Activated CD8-positive, alpha-beta T cell treated with anti-CD3 and anti-CD28 coated beads for 36 hours (primary cell): ENCODE measurements at regions of chr10 and their contacts with region 1.

Region 1: DNA sequence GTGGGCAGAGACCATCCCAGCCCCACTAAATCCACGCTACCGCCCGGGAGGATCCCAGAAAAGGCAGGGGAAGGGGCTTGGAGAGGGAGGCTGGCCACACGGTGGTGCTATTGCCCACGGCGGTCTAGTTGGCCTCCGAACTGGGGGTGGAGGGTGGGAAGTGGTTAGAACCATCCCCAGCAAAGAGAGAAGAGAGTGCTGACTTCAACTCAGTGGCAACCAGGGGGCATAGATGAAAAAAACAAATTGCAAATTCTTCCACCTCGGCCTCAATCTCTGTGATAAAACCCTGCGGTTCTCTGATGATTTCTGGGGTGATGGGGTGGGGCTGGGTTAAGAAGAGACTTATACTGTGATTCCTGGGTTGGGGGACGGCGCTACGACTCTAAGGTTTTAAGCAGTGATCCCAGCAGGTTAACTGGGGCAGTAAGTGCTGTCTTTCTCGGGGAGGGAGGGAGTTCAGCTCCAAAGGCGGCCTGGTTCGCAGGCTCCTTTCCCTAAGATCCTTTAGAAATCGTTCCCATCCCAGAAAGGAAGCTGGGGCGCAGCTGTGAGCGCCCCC is 154.5 kb upstream of the LYZL2 start:
- DNase-seq: peak; percentile 90
- ATAC-seq: peak; percentile 87
- H3K4me3 Mint-ChIP-seq: peak overlapping the region; percentile 70
- H3K27ac Mint-ChIP-seq: peak overlapping the region; percentile 71
- H3K4me1 Mint-ChIP-seq: peaks cover 17% of the 10 kb centered on the region
- H3K27me3 Mint-ChIP-seq: no peaks in the 10 kb centered on the region
- CTCF ChIP-seq: peak; percentile 95

Region 2: DNA sequence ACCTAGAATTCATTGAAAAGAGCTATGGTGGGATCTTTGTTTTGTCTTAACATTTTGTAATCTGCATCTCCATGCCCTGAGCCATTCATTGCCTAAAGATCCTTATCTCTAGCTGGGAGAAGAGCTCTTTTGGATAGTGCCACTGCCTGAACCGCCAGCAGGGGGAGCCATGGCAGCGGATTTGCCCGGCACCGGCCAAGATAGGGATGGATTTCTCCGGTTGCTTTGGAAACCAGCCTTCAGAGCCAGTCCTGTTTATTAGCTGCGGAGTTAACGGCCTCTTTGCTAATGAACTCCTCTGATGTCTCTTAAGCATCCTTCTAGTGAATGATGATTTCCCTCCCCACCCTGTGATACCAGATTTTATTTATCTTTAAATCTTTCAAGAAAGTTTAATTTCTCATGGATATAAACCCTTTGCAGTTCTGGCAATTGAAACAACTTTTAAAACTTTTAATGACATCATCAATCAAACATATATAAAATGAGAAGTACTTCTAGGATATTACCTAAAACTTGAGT is 96.3 kb before region 1 on chr10:
- CTCF ChIA-PET with region 1: interaction called, 20 read pairs
- POLR2A ChIA-PET with region 1: no interaction called
- intact Hi-C with region 1: no loop called
- DNase-seq: peak; percentile 87
- ATAC-seq: peak; percentile 64
- H3K4me3 Mint-ChIP-seq: no peak overlapping the region
- H3K27ac Mint-ChIP-seq: peak overlapping the region; percentile 7
- H3K4me1 Mint-ChIP-seq: peaks cover 37% of the 10 kb centered on the region
- H3K27me3 Mint-ChIP-seq: peaks cover 10% of the 10 kb centered on the region
- CTCF ChIP-seq: peak; percentile 94

Region 3: GRCh38 chr10:31031558-31032257 is 247.7 kb after region 1 on chr10 and contains the start of gene ZNF438:
- CTCF ChIA-PET with region 1: interaction called, 22 read pairs
- POLR2A ChIA-PET with region 1: interaction called, 5 read pairs
- intact Hi-C with region 1: loop called (anchors 10 kb)
- DNase-seq: peak; percentile 92
- ATAC-seq: peak; percentile 90
- H3K4me3 Mint-ChIP-seq: peak within 1 kb of the TSS; percentile 80
- H3K27ac Mint-ChIP-seq: peak within 1 kb of the TSS; percentile 97
- H3K4me1 Mint-ChIP-seq: peaks cover 5% of the 10 kb centered on the region
- H3K27me3 Mint-ChIP-seq: no peaks in the 10 kb centered on the region
- CTCF ChIP-seq: peak; percentile 55
- total RNA-seq, gene ZNF438: 3.0 to 3.9 TPM

Region 4: DNA sequence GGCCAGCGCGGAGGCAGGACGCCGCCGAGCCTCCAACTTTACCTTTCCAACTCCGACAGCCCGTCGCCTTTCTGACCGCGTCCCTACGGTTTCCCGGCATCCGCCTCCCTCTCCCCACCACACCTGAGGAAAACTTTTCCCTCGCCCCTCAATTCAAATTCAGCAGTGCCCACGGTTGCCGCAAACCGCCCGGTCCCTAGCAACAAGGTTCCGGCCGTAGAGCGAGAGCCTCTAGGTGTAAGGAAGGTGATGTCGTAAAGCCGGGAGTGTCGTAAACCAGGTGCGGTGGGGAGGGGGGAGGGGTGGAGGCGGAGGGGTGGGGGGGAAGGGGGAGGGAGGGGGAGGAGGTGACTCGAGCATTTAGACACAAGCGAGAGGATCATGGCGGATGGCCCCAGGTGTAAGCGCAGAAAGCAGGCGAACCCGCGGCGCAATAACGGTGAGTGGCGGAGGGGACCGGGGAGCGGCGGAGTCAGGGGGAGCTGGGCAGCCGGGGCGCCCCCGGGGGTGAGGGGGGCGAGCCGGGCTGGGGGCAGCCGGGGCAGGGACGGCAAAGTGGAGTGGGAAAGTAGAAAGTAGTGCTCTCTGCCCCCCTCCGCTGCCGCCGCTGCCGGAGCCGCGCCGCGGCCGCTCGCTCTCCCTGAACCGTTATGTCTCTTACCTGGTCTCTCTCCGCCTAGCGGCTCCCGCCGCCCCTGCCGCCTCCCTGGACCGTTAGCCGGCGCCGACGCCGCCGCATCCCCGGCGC is 535.0 kb after region 1 on chr10 and contains the start of gene ZEB1:
- CTCF ChIA-PET with region 1: interaction called, 5 read pairs
- POLR2A ChIA-PET with region 1: no interaction called
- intact Hi-C with region 1: loop called (anchors 10 kb)
- DNase-seq: peak; percentile 96
- ATAC-seq: peak; percentile 63
- H3K4me3 Mint-ChIP-seq: peak within 1 kb of the TSS; percentile 84
- H3K27ac Mint-ChIP-seq: peak within 1 kb of the TSS; percentile 96
- H3K4me1 Mint-ChIP-seq: peaks cover 41% of the 10 kb centered on the region
- H3K27me3 Mint-ChIP-seq: no peaks in the 10 kb centered on the region
- CTCF ChIP-seq: peak; percentile 30
- total RNA-seq, gene ZEB1: 28.4 to 29.7 TPM

Region 5: DNA sequence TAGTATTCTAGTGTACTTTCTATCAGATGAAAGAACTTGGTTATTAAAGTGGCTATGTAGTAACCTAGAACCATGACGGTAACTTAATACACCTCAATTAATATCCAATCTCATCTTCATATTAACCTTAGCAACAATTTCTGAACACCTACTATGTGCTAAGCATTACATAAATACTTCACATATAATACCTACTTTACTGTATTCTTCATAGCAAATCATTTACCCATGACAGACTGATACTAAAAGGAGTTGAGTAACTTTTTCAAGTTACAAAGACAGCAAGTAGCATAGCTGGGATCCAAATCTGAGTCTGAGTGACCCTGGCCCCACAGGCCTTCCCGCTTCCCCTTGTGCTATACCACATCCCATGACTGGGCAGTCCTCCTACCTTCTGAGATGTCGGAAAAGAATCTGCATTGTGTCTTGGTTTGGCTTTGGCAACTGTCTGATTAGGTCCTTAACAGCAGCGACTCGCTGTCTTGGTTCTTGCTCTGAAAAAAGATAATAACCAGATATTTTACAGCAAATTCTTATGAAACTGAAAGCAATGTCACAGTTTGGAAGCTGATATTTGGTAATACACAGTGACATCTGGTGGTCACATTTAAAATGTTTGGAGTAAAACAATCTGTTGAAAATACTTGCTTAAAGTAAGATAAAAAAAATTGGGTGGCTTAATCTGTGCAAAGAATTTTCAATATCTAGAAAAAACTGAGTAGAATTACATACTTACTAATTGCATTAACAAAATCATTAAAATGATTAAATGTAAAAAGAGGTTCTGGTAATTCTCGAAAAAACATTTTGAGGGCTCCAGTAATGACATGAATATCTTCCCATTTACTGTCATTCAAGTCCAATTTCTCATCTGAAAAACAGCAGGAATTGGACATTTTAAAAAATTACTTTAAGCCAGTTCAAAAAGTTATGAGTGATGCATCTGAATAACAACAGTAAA is 1024.5 kb after region 1 on chr10:
- CTCF ChIA-PET with region 1: interaction called, 8 read pairs
- POLR2A ChIA-PET with region 1: no interaction called
- intact Hi-C with region 1: loop called (anchors 5 kb)
- DNase-seq: peak; percentile 20
- ATAC-seq: peak; percentile 65
- H3K4me3 Mint-ChIP-seq: peak overlapping the region; percentile 60
- H3K27ac Mint-ChIP-seq: peak overlapping the region; percentile 88
- H3K4me1 Mint-ChIP-seq: peaks cover 7% of the 10 kb centered on the region
- H3K27me3 Mint-ChIP-seq: no peaks in the 10 kb centered on the region
- CTCF ChIP-seq: peak; percentile 69